ENCODE measurements at regions of chr2 and their contacts with region 1.

Region 1: DNA sequence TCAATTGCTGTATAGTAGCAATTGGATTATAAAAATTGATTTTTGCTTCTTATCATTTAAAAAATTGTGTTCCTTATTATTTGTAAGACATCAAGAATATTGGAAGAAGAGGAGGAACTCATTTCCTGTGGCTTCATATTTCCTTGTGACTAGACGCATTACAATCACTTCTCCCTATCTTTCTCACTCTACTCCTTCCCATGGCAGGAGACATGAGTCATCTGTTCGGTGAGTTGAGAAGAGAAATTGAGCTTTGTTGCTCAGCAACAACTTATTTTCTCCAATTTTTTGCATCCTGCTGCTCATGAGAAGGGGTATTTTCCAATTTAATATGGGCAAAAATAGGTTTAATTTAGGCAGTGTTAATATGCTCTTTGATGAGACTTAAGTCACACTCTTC is 1783.9 kb downstream of the SUCLG1 start:
- DNase-seq: no peak
- H3K4me3 Mint-ChIP-seq: no peak overlapping the region
- H3K27ac Mint-ChIP-seq: no peak overlapping the region
- H3K4me1 Mint-ChIP-seq: no peaks in the 10 kb centered on the region
- H3K27me3 Mint-ChIP-seq: no peaks in the 10 kb centered on the region
- CTCF ChIP-seq: no peak

Region 2: DNA sequence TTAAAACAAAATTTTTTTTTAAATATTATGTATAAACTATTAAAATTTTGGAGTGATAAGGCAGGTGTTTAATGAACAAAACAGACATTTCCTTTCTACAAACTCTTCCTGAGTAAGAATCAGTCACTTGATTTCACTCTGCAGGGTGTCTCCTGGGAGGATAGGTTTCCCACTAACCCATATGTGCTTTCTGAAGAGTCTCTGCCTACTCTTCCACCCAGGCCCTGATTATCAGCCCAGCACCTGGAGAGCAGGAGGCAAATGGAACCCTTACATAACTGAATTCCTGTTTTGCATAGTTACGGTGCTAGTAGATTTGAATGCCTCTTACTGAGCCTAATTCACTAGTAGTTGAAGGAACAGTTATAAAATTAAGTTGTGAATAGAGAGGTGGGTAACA is 65.3 kb after region 1 on chr2:
- CTCF ChIA-PET with region 1: no interaction called
- intact Hi-C with region 1: loop called (anchors 2 kb)
- DNase-seq: no peak
- H3K4me3 Mint-ChIP-seq: no peak overlapping the region
- H3K27ac Mint-ChIP-seq: no peak overlapping the region
- H3K4me1 Mint-ChIP-seq: no peaks in the 10 kb centered on the region
- H3K27me3 Mint-ChIP-seq: no peaks in the 10 kb centered on the region
- CTCF ChIP-seq: no peak